Aorta (tissue), 5 donors: ENCODE measurements at regions of chr3 and their contacts with region 1.

Region 1: GRCh38 chr3:169966428-169966950 is at the start of gene SEC62:
- DNase-seq: peak; percentile 96 to 98
- ATAC-seq: peak; percentile 99
- H3K4me3 ChIP-seq: peak within 1 kb of the TSS; percentile 87 to 90
- H3K27ac ChIP-seq: peak within 1 kb of the TSS in 1 of 2 donors; percentile 49
- H3K4me1 ChIP-seq: no peaks in the 10 kb centered on the region
- H3K27me3 ChIP-seq: no peaks in the 10 kb centered on the region
- total RNA-seq, gene SEC62: 116 to 125 TPM

Region 2: DNA sequence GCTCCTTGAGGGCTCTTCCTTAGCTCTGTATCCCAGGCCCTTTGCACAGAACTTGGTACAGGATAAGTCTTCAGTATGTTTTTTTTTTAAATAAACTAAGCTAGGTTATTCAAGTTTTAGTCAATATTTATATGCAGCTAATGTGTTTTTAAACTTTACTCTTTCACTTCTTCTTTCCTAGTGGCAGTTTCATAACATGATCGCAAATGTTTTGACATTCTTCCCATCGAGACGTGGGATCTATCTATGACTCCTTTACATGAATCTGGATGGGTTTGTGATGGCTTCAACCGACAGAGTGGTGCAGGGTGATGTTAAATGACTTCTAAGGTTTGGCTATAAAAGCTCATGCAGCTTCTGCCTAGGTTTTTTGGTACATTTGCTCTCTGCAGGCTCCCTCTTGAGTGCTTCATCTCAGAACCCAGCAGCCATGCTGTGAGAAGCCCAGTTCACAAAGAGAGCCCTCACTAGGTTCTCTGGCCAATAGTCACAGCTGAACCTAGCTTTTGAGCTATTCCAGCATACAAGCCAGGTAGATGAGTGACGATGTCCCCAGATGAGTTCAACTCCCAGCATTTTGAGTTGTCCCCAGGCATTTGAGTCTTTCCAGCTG is 289.5 kb before region 1 on chr3:
- intact Hi-C with region 1: no loop called
- DNase-seq: no peak
- ATAC-seq: no peak
- H3K4me3 ChIP-seq: no peak overlapping the region
- H3K27ac ChIP-seq: no peak overlapping the region
- H3K4me1 ChIP-seq: no peaks in the 10 kb centered on the region
- H3K27me3 ChIP-seq: no peaks in the 10 kb centered on the region

Region 3: DNA sequence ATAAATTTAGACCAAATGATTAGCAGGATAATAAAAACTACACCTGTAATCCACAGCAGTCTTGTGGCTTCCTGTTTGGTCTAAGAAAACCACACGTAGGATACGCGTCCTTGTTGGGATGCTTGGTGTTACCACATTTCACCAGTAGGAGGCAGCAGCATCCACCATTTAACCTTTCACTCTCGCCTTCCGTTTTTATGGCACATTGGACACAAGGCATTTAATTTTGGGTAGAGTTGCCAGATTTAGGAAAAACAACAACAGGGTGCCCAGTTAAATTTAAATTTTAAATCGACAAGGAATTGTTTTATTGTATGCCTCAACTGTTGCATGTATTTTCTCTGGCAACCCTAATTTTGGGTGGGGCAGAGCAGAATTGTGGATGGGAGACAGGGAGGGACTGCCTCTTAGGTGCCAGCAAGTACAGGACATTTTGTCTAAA is 103.0 kb before region 1 on chr3:
- intact Hi-C with region 1: loop called (anchors 5 to 10 kb)
- DNase-seq: peak in 1 of 2 donors; percentile 57
- ATAC-seq: peak; percentile 89
- H3K4me3 ChIP-seq: no peak overlapping the region
- H3K27ac ChIP-seq: no peak overlapping the region
- H3K4me1 ChIP-seq: no peaks in the 10 kb centered on the region
- H3K27me3 ChIP-seq: no peaks in the 10 kb centered on the region

Region 4: DNA sequence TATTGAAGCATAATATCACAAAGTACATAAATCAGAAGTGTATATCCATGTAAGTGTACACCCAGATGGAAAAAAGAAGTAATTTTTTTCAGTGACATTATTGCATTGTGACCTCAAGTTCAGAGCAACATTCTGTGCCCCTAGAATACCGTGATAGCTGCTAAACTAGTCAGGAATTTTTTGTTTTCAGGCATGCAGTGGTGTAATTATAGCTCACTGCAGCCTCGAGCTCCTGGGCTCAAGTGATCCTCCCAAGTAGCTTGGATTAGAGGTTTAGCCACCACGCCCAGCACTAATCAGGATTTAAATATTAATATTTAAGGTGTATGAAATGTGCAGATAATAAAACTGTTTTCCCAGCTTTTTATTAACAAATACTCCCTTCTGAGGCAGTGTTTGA is 25.7 kb after region 1 on chr3:
- intact Hi-C with region 1: no loop called
- DNase-seq: no peak
- ATAC-seq: no peak
- H3K4me3 ChIP-seq: no peak overlapping the region
- H3K27ac ChIP-seq: no peak overlapping the region
- H3K4me1 ChIP-seq: no peaks in the 10 kb centered on the region
- H3K27me3 ChIP-seq: no peaks in the 10 kb centered on the region

Region 5: GRCh38 chr3:170397579-170398177 is 431.2 kb after region 1 on chr3:
- intact Hi-C with region 1: no loop called
- DNase-seq: no peak
- ATAC-seq: no peak
- H3K4me3 ChIP-seq: no peak overlapping the region
- H3K27ac ChIP-seq: no peak overlapping the region
- H3K4me1 ChIP-seq: no peaks in the 10 kb centered on the region
- H3K27me3 ChIP-seq: no peaks in the 10 kb centered on the region